ENCODE measurements at regions of chr2 and their contacts with region 1.

Region 1: GRCh38 chr2:11583840-11584524 is 50.1 kb downstream of the GREB1 start:
- H3K4me3 ChIP-seq: no peak overlapping the region
- H3K27ac ChIP-seq: no peak overlapping the region
- H3K4me1 ChIP-seq: peaks cover 3% of the 10 kb centered on the region
- CTCF ChIP-seq: peak; percentile 81

Region 2: GRCh38 chr2:11090187-11090586 is 493.8 kb before region 1 on chr2:
- CTCF ChIA-PET with region 1: no interaction called
- POLR2A ChIA-PET with region 1: no interaction called
- H3K4me3 ChIP-seq: no peak overlapping the region
- H3K27ac ChIP-seq: no peak overlapping the region
- H3K4me1 ChIP-seq: no peaks in the 10 kb centered on the region
- CTCF ChIP-seq: no peak

Region 3: GRCh38 chr2:11124503-11125068 is 459.4 kb before region 1 on chr2:
- CTCF ChIA-PET with region 1: interaction called, 15 read pairs
- POLR2A ChIA-PET with region 1: no interaction called
- H3K4me3 ChIP-seq: no peak overlapping the region
- H3K27ac ChIP-seq: no peak overlapping the region
- H3K4me1 ChIP-seq: no peaks in the 10 kb centered on the region
- CTCF ChIP-seq: peak; percentile 48; the same call in 1 of the 2 replicates

Region 4: DNA sequence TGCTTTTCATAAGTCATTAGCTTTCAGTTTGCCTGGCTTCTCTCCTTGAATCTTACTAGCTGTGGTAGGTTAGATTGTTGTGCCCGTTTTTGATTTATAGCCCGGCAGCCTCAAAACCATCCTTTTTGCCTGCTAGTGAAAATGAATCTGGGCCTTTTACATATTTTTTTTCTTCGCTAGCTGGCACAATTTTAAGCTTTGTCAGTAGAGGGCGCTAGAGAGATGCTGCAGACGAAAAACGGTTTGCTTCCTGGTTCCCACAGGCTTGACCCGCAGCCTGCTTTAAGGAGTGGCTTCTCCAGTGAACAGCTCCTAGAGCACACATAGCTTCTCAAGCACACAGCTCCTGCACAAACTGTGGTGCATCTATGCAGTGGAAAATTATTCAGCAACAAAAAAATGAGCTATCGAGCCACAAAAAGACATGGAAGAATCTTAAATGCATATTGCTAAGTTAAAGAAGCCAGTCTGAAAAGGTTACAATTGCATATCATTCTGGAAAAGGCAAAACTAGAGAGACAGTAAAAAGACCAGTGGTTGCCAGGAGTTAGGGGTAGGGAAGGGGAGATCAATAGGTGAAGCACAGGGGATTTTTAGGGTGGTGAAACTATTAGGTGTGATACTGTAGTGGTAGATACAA is 165.9 kb before region 1 on chr2:
- CTCF ChIA-PET with region 1: interaction called, 15 read pairs
- POLR2A ChIA-PET with region 1: no interaction called
- H3K4me3 ChIP-seq: no peak overlapping the region
- H3K27ac ChIP-seq: no peak overlapping the region
- H3K4me1 ChIP-seq: no peaks in the 10 kb centered on the region
- CTCF ChIP-seq: no peak

Region 5: DNA sequence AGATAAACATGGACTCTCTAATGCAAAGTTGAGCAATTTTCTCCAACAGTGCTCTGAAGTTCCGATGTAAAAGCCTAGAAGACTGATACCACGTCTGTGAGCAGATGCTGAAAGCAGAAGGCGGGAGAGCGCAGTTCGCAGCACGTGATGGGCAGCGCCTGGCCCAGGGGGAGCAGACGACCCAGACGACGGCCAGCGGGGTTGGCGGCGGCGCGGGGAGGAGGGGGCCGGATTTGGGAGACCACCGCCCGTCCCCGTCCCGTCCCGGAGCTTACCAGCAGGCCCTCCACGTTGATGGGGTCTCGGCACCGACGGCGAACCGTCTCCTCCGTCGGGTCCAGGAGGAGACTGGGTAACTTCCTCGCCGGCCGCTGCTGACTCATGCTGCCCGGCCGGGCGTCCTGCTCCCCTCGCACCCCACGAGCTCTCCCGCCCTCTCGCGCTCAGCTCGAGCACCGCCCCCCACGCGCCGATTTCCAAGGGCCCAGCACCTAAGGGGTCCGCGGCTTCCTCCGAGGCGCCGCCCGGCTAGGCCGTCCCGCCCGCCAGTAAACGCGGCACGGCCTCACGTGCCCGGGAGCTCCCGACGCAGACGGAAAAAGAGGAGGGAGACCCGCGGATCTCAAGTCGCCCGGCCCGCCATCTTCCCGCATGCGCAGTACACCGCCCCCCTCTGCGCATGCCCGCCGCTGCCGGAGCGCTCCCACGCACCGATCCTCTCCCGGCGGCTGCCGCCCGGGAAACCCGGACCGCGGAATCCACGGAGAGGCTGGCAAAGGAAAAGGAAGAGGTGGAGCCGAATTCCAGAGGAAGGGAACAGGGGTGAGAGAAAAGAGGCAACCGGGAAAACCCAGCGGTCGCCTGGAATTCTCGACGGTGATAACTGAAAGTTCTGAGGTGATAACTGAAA is 118.2 kb before region 1 on chr2 and contains the start of gene E2F6:
- CTCF ChIA-PET with region 1: interaction called, 13 read pairs
- POLR2A ChIA-PET with region 1: no interaction called
- H3K4me3 ChIP-seq: peak within 1 kb of the TSS; percentile 57
- H3K27ac ChIP-seq: peak within 1 kb of the TSS; percentile 73
- H3K4me1 ChIP-seq: no peaks in the 10 kb centered on the region
- CTCF ChIP-seq: 0 out of 2 replicates have a peak, but pooled peaks have one; percentile 27

Region 6: GRCh38 chr2:11534744-11535484 is 49.1 kb before region 1 on chr2:
- CTCF ChIA-PET with region 1: interaction called, 17 read pairs
- POLR2A ChIA-PET with region 1: no interaction called
- H3K4me3 ChIP-seq: no peak overlapping the region
- H3K27ac ChIP-seq: no peak overlapping the region
- H3K4me1 ChIP-seq: peaks cover 9% of the 10 kb centered on the region; the same call in 1 of the 2 replicates
- CTCF ChIP-seq: 0 out of 2 replicates have a peak, but pooled peaks have one; percentile 27

Region 7: GRCh38 chr2:11602563-11603204 is 18.7 kb after region 1 on chr2:
- CTCF ChIA-PET with region 1: interaction called, 17 read pairs
- POLR2A ChIA-PET with region 1: no interaction called
- H3K4me3 ChIP-seq: no peak overlapping the region
- H3K27ac ChIP-seq: no peak overlapping the region
- H3K4me1 ChIP-seq: no peaks in the 10 kb centered on the region
- CTCF ChIP-seq: no peak